ENCODE measurements at regions of chr11 and their contacts with region 1.

Region 1: DNA sequence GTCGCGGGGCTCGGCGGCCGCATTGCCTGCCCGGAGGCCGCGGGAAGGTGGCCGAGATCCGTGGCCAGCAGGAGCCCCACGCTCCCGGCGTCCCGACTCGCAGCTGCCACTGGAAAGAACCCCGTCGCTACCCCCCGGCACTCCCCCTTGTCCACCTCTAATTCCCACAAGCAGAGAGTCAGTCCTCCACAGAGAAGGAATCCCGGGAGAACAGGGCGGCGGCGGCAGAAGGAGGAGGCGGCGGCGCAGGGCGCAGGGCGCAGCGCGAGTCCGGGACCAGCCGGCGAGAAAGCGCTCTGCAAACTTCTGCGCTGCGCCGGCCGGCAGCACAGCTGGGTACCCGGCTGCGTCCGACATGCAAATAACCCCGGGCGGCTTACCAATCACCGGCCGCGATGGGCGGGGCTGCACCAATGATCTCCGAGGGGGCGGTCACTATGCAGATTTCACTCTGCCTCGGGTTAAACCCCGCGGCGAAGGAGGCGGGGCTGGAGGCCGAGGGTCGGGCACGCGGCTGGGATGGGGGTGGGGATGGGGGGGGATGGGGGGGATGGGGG is at the start of gene ABTB2:
- DNase-seq: peak; percentile 64
- ATAC-seq: peak; percentile 92
- H3K4me3 ChIP-seq: peak within 1 kb of the TSS; percentile 84
- H3K27ac ChIP-seq: peak within 1 kb of the TSS; percentile 13; the same call in 1 of the 2 replicates
- H3K4me1 ChIP-seq: peaks cover 5% of the 10 kb centered on the region
- H3K27me3 ChIP-seq: peaks cover 0 to 3% of the 10 kb centered on the region in 2 experiments; a peak in 2 of 4 replicates
- CTCF ChIP-seq: no peak
- EP300 ChIP-seq: no peak
- POLR2A ChIP-seq: peak; percentile 99
- RAD21 ChIP-seq: no peak
- polyA plus RNA-seq, gene ABTB2: 0.13 to 0.16 TPM

Region 2: GRCh38 chr11:33857933-33858371 is 499.8 kb before region 1 on chr11:
- CTCF ChIA-PET with region 1: interaction called, 6 read pairs
- POLR2A ChIA-PET with region 1: no interaction called
- RAD21 ChIA-PET with region 1: interaction called, 3 read pairs
- SMC1A ChIA-PET with region 1: no interaction called
- in situ Hi-C with region 1: loop called (anchors 5 kb)
- intact Hi-C with region 1: loop called (anchors 2 kb)
- DNase-seq: peak; percentile 32
- ATAC-seq: peak; percentile 99
- H3K4me3 ChIP-seq: no peak overlapping the region
- H3K27ac ChIP-seq: no peak overlapping the region
- H3K4me1 ChIP-seq: no peaks in the 10 kb centered on the region
- H3K27me3 ChIP-seq: peaks cover 0 to 2% of the 10 kb centered on the region in 2 experiments; a peak in 1 of 4 replicates
- CTCF ChIP-seq: peak; percentile 85 to 94 (median 88); a peak in 5 of 6 replicates
- EP300 ChIP-seq: no peak
- POLR2A ChIP-seq: no peak
- RAD21 ChIP-seq: peak; percentile 100

Region 3: GRCh38 chr11:33996498-33997454 is 361.0 kb before region 1 on chr11:
- CTCF ChIA-PET with region 1: interaction called, 21 read pairs
- POLR2A ChIA-PET with region 1: no interaction called
- RAD21 ChIA-PET with region 1: interaction called, 15 read pairs
- SMC1A ChIA-PET with region 1: interaction called, 8 read pairs
- in situ Hi-C with region 1: loop called (anchors 5 kb)
- intact Hi-C with region 1: loop called (anchors 1 kb)
- DNase-seq: peak; percentile 49
- ATAC-seq: peak; percentile 96
- H3K4me3 ChIP-seq: no peak overlapping the region; the same call in 1 of the 2 replicates
- H3K27ac ChIP-seq: no peak overlapping the region
- H3K4me1 ChIP-seq: peaks cover 25% of the 10 kb centered on the region
- H3K27me3 ChIP-seq: peaks cover 3 to 5% of the 10 kb centered on the region in 2 experiments; a peak in 3 of 4 replicates
- CTCF ChIP-seq: peak; percentile 82 to 89 (median 84); a peak in 5 of 6 replicates
- EP300 ChIP-seq: no peak
- POLR2A ChIP-seq: no peak
- RAD21 ChIP-seq: peak; percentile 87

Region 4: DNA sequence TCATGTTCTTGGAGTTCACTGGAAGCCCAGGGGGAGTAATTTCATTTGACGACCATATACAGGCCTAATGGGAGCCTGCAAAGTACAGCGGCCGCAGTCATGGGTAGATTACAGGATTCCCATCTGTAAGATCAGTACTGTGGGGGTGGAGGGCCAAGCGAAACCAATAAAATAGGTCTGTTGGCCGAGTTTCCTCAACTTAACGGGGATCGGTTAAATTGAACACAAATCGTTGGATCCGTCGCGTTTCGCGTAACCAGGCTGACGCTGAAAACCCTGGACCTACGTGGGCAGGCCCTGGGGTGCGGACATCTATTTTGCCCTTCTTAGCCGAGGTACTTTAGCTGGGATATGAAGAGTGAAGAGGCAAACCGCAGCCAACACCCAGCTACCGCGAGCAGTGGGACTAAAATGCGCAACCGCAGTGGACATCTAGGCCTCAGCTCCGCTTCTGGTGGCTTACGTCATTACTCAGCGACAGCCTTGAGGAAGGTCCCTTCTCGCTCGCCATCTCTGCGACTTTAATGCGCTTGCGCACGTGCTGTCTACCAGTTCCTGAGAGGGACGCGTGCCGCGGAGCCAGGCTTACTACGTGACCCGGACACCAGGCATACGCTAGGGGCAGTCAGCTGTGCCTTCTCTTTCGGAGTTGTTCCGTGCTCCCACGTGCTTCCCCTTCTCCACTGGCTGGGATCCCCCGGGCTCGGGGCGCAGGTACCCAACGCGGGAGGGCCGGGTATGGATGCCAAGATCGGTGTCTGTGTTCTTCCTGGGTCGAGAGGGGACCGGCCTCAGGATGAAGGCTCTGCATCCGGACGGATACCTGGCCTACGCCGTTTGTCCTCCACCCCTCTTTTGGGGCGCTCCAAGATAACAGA is 252.5 kb before region 1 on chr11 and contains the start of gene NAT10:
- CTCF ChIA-PET with region 1: interaction called, 3 read pairs
- POLR2A ChIA-PET with region 1: no interaction called
- RAD21 ChIA-PET with region 1: interaction called, 4 read pairs
- SMC1A ChIA-PET with region 1: interaction called, 3 read pairs
- in situ Hi-C with region 1: no loop called
- intact Hi-C with region 1: loop called (anchors 2 kb)
- DNase-seq: peak; percentile 99
- ATAC-seq: peak; percentile 94
- H3K4me3 ChIP-seq: peak within 1 kb of the TSS; percentile 95
- H3K27ac ChIP-seq: peak within 1 kb of the TSS; percentile 89
- H3K4me1 ChIP-seq: peaks cover 15% of the 10 kb centered on the region
- H3K27me3 ChIP-seq: no peaks in the 10 kb centered on the region
- CTCF ChIP-seq: 0 out of 6 replicates have a peak, but pooled peaks of 1 of the 3 experiments have one; percentile 17
- EP300 ChIP-seq: peak in 1 of 2 experiments; percentile 73; a peak in 2 of 4 replicates
- POLR2A ChIP-seq: peak; percentile 96
- RAD21 ChIP-seq: 0 out of 2 replicates have a peak, but pooled peaks have one; percentile 7
- polyA plus RNA-seq, gene NAT10: 45.1 to 72.5 TPM

Region 5: GRCh38 chr11:34243726-34244464 is 113.9 kb before region 1 on chr11:
- CTCF ChIA-PET with region 1: interaction called, 4 read pairs
- POLR2A ChIA-PET with region 1: interaction called, 3 read pairs
- RAD21 ChIA-PET with region 1: interaction called, 14 read pairs
- SMC1A ChIA-PET with region 1: interaction called, 39 read pairs
- in situ Hi-C with region 1: loop called (anchors 5 kb)
- intact Hi-C with region 1: loop called (anchors 2 kb)
- DNase-seq: peak; percentile 86
- ATAC-seq: peak; percentile 80
- H3K4me3 ChIP-seq: no peak overlapping the region
- H3K27ac ChIP-seq: peak overlapping the region; percentile 84
- H3K4me1 ChIP-seq: peaks cover 82% of the 10 kb centered on the region
- H3K27me3 ChIP-seq: no peaks in the 10 kb centered on the region
- CTCF ChIP-seq: no peak
- EP300 ChIP-seq: peak; percentile 74 to 87
- POLR2A ChIP-seq: no peak
- RAD21 ChIP-seq: peak; percentile 29; the same call in 1 of the 2 replicates

Region 6: GRCh38 chr11:34339149-34340064 is 18.4 kb before region 1 on chr11:
- CTCF ChIA-PET with region 1: interaction called, 12 read pairs
- POLR2A ChIA-PET with region 1: no interaction called
- RAD21 ChIA-PET with region 1: interaction called, 6 read pairs
- SMC1A ChIA-PET with region 1: interaction called, 16 read pairs
- in situ Hi-C with region 1: no loop called
- intact Hi-C with region 1: no loop called
- DNase-seq: peak; percentile 23
- ATAC-seq: peak; percentile 94
- H3K4me3 ChIP-seq: no peak overlapping the region
- H3K27ac ChIP-seq: no peak overlapping the region
- H3K4me1 ChIP-seq: peaks cover 3% of the 10 kb centered on the region
- H3K27me3 ChIP-seq: no peaks in the 10 kb centered on the region
- CTCF ChIP-seq: no peak
- EP300 ChIP-seq: 0 out of 4 replicates have a peak, but pooled peaks of 1 of the 2 experiments have one; percentile 10
- POLR2A ChIP-seq: no peak
- RAD21 ChIP-seq: no peak

Region 7: DNA sequence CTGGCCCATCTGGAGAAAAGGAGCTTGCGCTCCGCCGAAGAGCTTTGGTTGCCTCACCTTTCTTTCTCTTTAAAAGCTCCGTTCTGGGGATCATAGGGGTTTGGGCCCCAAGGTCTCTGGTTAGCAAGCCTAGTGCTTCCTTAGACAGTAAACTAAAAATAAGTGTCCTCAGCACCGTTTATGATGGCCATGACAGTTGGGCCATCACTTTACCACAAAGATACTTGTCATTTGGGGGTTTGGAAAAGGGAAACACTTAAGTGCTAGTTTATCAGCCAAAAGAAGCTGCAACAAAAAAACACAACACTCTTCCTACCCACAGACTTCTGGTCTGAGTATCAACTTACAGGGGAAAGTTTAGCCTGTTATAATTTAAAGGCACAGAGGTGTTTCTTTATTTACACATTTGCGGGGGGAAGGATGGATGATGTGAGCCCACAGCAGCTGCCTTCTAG is 692.8 kb after region 1 on chr11:
- CTCF ChIA-PET with region 1: no interaction called
- POLR2A ChIA-PET with region 1: no interaction called
- RAD21 ChIA-PET with region 1: no interaction called
- SMC1A ChIA-PET with region 1: no interaction called
- in situ Hi-C with region 1: no loop called
- intact Hi-C with region 1: no loop called
- DNase-seq: no peak
- ATAC-seq: peak; percentile 18; the same call in 2 of the 3 replicates
- H3K4me3 ChIP-seq: no peak overlapping the region
- H3K27ac ChIP-seq: peak overlapping the region; percentile 61
- H3K4me1 ChIP-seq: peaks cover 14% of the 10 kb centered on the region
- H3K27me3 ChIP-seq: no peaks in the 10 kb centered on the region
- CTCF ChIP-seq: no peak
- EP300 ChIP-seq: no peak
- POLR2A ChIP-seq: no peak
- RAD21 ChIP-seq: no peak